A549 (cell line): ENCODE measurements at regions of chr2 and their contacts with region 1.

Region 1: DNA sequence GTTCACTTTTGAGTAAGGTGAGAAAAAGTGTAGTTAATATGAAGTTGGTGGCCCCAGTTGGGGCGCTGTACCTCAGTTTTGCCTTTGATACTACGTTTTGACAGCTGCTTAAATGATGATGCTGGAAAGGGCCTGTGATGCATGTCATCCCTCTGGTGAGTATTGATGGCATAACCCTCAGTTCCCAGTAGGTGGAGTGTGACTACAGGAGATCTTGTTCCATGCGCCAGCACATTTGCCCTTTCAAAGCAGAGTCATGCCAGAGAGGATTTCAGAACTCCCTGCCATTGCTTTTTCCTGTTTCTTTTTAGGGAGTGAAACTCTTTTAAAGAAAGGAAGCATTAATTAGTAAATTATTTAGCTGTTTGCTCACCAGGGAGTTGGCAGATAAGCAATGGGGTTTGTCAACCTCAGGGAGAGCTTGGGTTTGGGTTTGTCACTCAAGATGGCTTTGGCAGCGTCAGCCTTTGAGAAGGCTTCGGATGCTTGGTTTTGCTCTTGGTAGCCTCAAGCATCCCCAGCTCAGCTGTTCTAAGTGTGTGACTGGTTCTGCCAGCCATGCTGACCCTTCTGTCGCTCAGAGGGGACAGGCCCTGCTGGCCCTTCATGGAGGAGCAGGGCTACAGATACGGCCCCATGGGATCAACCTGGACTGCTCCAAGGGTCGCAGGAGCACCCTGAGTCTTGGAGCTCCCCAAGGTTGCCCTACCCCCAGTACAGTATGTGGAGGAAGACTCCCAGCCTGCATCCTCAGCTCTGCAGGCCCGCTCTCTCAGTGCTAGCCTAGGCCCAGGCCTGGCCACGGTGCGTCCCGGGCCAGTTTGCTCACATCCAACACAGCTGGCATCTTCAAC is 29.1 kb downstream of the ARMC9 start:
- DNase-seq: peak; percentile 83 to 92
- ATAC-seq: peak; percentile 99
- H3K4me3 ChIP-seq: no peak overlapping the region
- H3K27ac ChIP-seq: peak overlapping the region in 1 of 2 experiments; percentile 53; a peak in 1 of 6 replicates
- H3K4me1 ChIP-seq: peaks cover 5% of the 10 kb centered on the region; the same call in 1 of the 3 replicates
- CTCF ChIP-seq: peak; percentile 87
- EP300 ChIP-seq: no peak
- POLR2A ChIP-seq: no peak
- RAD21 ChIP-seq: peak; percentile 88 to 94

Region 2: DNA sequence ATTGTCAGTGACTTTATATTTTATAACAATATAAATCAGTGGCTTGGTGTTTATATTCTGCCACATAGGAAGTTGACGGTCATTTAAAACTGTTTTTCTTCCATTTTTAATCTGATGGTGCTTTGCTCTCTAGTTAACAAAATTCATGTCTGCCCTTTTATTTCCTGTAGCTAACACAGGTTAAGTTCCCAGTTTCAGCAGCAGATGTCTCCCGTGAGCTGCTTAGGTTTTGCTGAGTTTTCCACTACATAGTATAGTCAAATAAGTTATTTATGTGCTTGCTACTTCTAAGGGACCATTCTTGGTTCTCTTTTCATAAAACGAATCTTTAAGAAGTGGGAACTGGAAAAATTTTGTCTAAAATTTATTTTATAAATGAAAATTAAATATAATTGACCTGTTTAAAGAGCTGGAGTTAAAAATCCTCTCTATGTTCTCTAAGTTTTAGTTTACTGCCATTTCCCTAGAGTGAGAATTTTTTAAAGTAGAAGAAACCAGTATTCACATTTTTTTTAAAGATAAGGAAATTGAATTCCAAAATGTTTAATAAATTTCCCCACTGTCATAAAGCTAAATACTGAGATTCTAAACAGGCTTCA is 123.3 kb before region 1 on chr2:
- CTCF ChIA-PET with region 1: interaction called, 18 read pairs
- POLR2A ChIA-PET with region 1: no interaction called
- DNase-seq: peak; percentile 21 to 55
- ATAC-seq: peak; percentile 84 to 89; a peak in 5 of 6 replicates
- H3K4me3 ChIP-seq: no peak overlapping the region
- H3K27ac ChIP-seq: no peak overlapping the region
- H3K4me1 ChIP-seq: peaks cover 42% of the 10 kb centered on the region
- CTCF ChIP-seq: peak; percentile 90
- EP300 ChIP-seq: no peak
- POLR2A ChIP-seq: no peak
- RAD21 ChIP-seq: peak; percentile 76 to 77

Region 3: GRCh38 chr2:231212329-231212845 is 15.1 kb before region 1 on chr2:
- CTCF ChIA-PET with region 1: interaction called, 38 read pairs
- POLR2A ChIA-PET with region 1: no interaction called
- DNase-seq: no peak
- ATAC-seq: peak in 1 of 2 experiments; percentile 45; a peak in 2 of 6 replicates
- H3K4me3 ChIP-seq: no peak overlapping the region
- H3K27ac ChIP-seq: no peak overlapping the region
- H3K4me1 ChIP-seq: no peaks in the 10 kb centered on the region
- CTCF ChIP-seq: no peak
- EP300 ChIP-seq: no peak
- POLR2A ChIP-seq: no peak
- RAD21 ChIP-seq: no peak

Region 4: DNA sequence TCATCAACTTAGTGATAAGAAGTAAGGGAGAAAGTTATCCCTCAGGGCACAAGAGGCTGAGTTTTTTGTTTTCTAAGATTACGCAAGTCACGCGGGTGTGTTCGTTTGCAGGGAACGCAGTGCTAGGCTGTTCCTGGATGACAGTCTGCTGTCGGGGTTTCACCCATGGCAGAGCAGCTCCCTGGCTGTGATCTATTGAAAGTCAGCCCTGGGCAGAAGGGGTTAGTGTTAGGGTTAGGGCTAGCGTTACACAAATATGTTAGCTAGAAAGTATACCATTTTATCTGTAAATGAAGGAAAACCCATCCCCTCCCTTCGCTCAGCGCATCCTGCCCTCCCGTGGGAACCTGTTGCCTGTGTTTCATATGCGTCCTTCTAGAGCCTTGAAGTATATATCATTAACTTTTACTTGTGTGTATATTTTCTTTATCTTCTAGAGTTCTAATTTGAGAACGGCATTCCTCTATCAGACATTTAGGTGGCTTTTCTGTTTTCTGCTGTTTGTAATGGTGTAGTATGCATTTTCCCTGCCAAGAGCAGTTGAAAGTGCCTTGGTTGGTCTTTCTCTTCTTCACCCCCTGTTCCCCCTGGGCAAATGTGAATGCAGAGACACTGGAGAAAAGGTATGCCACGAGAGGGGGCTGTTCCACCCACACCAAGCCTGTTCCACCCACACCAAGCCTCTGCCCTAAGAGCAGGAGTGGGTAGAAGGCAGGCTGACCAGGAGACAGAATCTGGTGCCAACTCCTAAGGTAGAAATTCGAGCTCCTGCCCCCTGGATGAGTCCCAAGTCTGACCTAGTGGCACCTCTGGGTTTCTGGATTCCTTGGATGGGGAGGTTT is 17.9 kb after region 1 on chr2:
- CTCF ChIA-PET with region 1: interaction called, 26 read pairs
- POLR2A ChIA-PET with region 1: no interaction called
- DNase-seq: peak in 1 of 2 experiments; percentile 17
- ATAC-seq: peak; percentile 70 to 82; a peak in 5 of 6 replicates
- H3K4me3 ChIP-seq: no peak overlapping the region
- H3K27ac ChIP-seq: no peak overlapping the region
- H3K4me1 ChIP-seq: peaks cover 4% of the 10 kb centered on the region; the same call in 1 of the 3 replicates
- CTCF ChIP-seq: no peak
- EP300 ChIP-seq: no peak
- POLR2A ChIP-seq: no peak
- RAD21 ChIP-seq: peak in 1 of 2 experiments; percentile 32; a peak in 1 of 5 replicates

Region 5: GRCh38 chr2:231418820-231419640 is 191.5 kb after region 1 on chr2:
- CTCF ChIA-PET with region 1: interaction called, 333 read pairs
- POLR2A ChIA-PET with region 1: no interaction called
- DNase-seq: no peak
- ATAC-seq: 0 out of 6 replicates have a peak, but pooled peaks of 1 of the 2 experiments have one; percentile 16
- H3K4me3 ChIP-seq: no peak overlapping the region
- H3K27ac ChIP-seq: no peak overlapping the region
- H3K4me1 ChIP-seq: no peaks in the 10 kb centered on the region
- CTCF ChIP-seq: no peak
- EP300 ChIP-seq: no peak
- POLR2A ChIP-seq: no peak
- RAD21 ChIP-seq: no peak